Caco-2 (cell line): ENCODE measurements at regions of chr6 and their contacts with region 1.

Region 1: GRCh38 chr6:27838058-27838944 is 73.9 kb downstream of the OR2B2 start:
- DNase-seq: peak; percentile 91 to 92
- H3K4me3 ChIP-seq: peak overlapping the region; percentile 77
- H3K4me3 Mint-ChIP-seq: no peak overlapping the region
- H3K27ac Mint-ChIP-seq: no peak overlapping the region
- H3K4me1 ChIP-seq: peaks cover 14% of the 10 kb centered on the region; the same call in 1 of the 2 replicates
- H3K4me1 Mint-ChIP-seq: peaks cover 21% of the 10 kb centered on the region
- H3K27me3 ChIP-seq: no peaks in the 10 kb centered on the region
- H3K27me3 Mint-ChIP-seq: no peaks in the 10 kb centered on the region
- CTCF ChIP-seq: no peak

Region 2: GRCh38 chr6:26025894-26026832 is 1812.1 kb before region 1 on chr6:
- CTCF ChIA-PET with region 1: no interaction called
- POLR2A ChIA-PET with region 1: interaction called, 3 read pairs
- intact Hi-C with region 1: loop called (anchors 10 kb)
- DNase-seq: peak; percentile 94 to 95
- H3K4me3 ChIP-seq: peak overlapping the region; percentile 74
- H3K4me3 Mint-ChIP-seq: peak overlapping the region; percentile 85
- H3K27ac Mint-ChIP-seq: peak overlapping the region; percentile 100
- H3K4me1 ChIP-seq: peaks cover 18% of the 10 kb centered on the region; the same call in 1 of the 2 replicates
- H3K4me1 Mint-ChIP-seq: peaks cover 35% of the 10 kb centered on the region
- H3K27me3 ChIP-seq: no peaks in the 10 kb centered on the region
- H3K27me3 Mint-ChIP-seq: peaks cover 4% of the 10 kb centered on the region
- CTCF ChIP-seq: peak; percentile 81 to 87

Region 3: DNA sequence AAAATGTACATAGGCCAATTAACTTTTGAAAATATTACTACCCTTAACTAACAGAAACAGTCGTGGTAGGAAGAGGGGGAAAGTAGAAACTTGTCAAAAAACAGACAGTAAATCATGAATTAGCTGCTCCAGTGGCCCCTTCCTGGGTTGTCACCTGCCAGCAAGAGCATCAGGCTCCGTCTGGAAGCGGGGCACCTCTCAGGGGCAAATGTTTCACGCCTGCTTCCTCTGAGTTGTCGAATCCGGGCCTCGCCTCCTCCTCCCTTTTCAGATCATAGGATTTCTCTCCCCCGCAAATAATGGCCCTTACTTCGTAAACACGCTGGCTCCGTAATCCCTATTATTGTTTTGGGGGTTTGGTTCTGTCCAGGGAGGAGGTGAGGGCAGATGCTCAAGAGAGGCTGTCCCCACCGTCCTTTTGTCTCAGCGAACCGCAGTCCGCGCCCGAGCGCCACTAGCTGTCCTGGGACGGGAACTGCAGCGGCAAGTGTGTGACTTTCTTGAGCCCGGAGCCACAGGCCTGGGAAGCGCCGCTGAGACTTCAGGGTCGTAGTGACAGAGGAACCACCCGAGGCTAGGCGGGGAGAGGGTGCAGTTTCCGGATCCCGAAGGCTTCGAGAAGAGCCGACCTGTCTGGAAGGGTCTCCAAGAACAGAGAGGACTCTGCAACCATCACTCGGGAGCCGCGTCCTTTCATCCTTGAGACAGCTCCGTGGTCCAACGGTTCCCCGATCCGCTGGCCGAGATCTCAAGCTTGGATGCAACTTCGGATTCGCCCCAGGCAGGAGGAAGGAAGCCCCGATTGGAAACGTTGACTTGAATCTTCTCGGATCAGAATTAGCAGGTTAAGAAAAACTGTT is 150.9 kb before region 1 on chr6:
- CTCF ChIA-PET with region 1: no interaction called
- POLR2A ChIA-PET with region 1: no interaction called
- intact Hi-C with region 1: no loop called
- DNase-seq: peak; percentile 85 to 87
- H3K4me3 ChIP-seq: peak overlapping the region; percentile 51
- H3K4me3 Mint-ChIP-seq: peak overlapping the region; percentile 78
- H3K27ac Mint-ChIP-seq: peak overlapping the region; percentile 60
- H3K4me1 ChIP-seq: no peaks in the 10 kb centered on the region
- H3K4me1 Mint-ChIP-seq: peaks cover 8% of the 10 kb centered on the region
- H3K27me3 ChIP-seq: no peaks in the 10 kb centered on the region
- H3K27me3 Mint-ChIP-seq: no peaks in the 10 kb centered on the region
- CTCF ChIP-seq: peak; percentile 63 to 81

Region 4: GRCh38 chr6:27700337-27700736 is 138.0 kb before region 1 on chr6:
- CTCF ChIA-PET with region 1: no interaction called
- POLR2A ChIA-PET with region 1: no interaction called
- intact Hi-C with region 1: no loop called
- DNase-seq: no peak
- H3K4me3 ChIP-seq: no peak overlapping the region
- H3K4me3 Mint-ChIP-seq: no peak overlapping the region
- H3K27ac Mint-ChIP-seq: no peak overlapping the region
- H3K4me1 ChIP-seq: no peaks in the 10 kb centered on the region
- H3K4me1 Mint-ChIP-seq: no peaks in the 10 kb centered on the region
- H3K27me3 ChIP-seq: no peaks in the 10 kb centered on the region
- H3K27me3 Mint-ChIP-seq: no peaks in the 10 kb centered on the region
- CTCF ChIP-seq: no peak

Region 5: DNA sequence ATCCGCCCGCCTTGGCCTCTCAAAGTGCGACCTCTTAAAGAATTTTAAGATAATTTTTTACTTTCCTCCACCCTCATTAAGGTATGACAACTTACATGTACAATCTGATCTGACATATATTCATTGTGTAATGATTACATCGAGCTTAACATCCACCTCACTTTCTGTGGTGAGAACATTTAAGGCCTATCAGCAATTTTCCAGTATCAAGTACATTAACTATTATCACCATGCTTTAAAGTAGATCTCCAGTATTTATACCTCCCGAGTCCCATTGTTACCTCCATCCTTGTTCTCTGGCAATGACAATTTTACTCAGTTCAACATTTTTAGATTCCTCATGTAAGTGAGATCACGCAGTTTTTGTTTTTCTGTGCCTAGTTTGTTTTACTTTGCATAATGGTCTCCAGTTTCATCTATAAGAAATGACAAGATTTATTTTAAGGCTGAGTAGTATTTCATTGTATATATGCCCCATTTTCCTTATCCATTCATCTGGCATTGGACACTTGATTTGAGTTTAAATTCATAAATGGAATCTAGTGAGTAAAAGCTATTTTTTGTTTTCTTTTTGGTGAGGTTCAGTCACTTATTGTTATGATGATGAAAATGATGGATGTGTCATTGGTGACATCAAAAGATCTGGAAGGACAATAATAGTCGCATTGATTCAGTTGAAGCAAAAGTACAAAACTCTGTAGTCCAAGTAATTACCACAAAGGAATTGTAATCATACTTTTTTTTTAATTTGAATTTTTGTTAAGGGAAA is 13.1 kb before region 1 on chr6:
- CTCF ChIA-PET with region 1: interaction called, 3 read pairs
- POLR2A ChIA-PET with region 1: interaction called, 20 read pairs
- intact Hi-C with region 1: no loop called
- DNase-seq: no peak
- H3K4me3 ChIP-seq: peak overlapping the region; percentile 78
- H3K4me3 Mint-ChIP-seq: peak overlapping the region; percentile 89
- H3K27ac Mint-ChIP-seq: peak overlapping the region; percentile 97
- H3K4me1 ChIP-seq: peaks cover 11% of the 10 kb centered on the region; the same call in 1 of the 2 replicates
- H3K4me1 Mint-ChIP-seq: peaks cover 21% of the 10 kb centered on the region
- H3K27me3 ChIP-seq: no peaks in the 10 kb centered on the region
- H3K27me3 Mint-ChIP-seq: peaks cover 4% of the 10 kb centered on the region
- CTCF ChIP-seq: no peak

Region 6: DNA sequence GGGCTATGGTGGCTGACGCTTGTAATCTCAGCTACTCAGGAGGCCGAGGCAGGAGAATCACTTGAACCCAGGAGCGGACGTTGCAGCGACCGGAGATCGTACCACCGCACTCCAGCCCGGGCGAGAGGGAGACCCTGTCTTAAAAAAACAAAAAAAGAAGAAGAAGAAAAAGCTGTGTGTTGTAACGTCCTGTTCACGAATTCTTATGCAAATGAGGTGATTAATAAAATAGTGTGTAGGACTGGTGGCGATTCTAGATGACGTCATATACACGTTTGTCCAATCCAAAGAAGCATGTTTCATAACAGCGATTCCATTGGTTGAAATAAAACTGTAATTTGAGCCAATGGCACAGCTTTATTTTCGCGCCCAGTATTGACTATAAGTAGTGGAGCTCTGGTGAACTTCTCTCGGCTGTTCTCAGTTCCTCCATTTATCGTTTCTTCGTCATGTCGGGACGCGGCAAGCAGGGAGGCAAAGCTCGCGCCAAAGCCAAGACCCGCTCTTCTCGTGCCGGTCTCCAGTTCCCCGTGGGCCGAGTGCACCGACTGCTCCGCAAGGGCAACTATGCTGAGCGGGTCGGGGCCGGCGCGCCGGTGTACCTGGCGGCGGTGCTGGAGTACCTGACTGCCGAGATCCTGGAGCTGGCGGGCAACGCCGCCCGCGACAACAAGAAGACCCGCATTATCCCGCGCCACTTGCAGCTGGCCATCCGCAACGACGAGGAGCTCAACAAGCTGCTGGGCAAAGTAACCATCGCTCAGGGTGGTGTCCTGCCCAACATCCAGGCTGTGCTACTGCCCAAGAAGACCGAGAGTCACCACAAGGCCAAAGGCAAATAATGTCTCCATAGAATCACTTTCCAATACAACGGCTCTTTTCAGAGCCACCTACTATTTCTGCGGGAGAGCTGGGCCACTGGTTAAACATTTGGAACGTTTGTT is 26.9 kb after region 1 on chr6:
- CTCF ChIA-PET with region 1: interaction called, 4 read pairs
- POLR2A ChIA-PET with region 1: interaction called, 325 read pairs
- intact Hi-C with region 1: loop called (anchors 1 kb)
- DNase-seq: peak; percentile 85 to 89
- H3K4me3 ChIP-seq: peak overlapping the region; percentile 49
- H3K4me3 Mint-ChIP-seq: peak overlapping the region; percentile 76
- H3K27ac Mint-ChIP-seq: peak overlapping the region; percentile 99
- H3K4me1 ChIP-seq: 0 out of 2 replicates have a peak, but pooled peaks cover 4% of the 10 kb centered on the region
- H3K4me1 Mint-ChIP-seq: peaks cover 12% of the 10 kb centered on the region
- H3K27me3 ChIP-seq: no peaks in the 10 kb centered on the region
- H3K27me3 Mint-ChIP-seq: peaks cover 9% of the 10 kb centered on the region
- CTCF ChIP-seq: no peak